Activated CD4-positive, alpha-beta T cell treated with anti-CD3 and anti-CD28 coated beads for 36 hours (primary cell): ENCODE measurements at regions of chr20 and their contacts with region 1.

Region 1: GRCh38 chr20:23988561-23988960 is at the start of gene GGTLC1:
- DNase-seq: no peak
- ATAC-seq: no peak
- H3K4me3 Mint-ChIP-seq: no peak within 1 kb of the TSS
- H3K27ac Mint-ChIP-seq: no peak within 1 kb of the TSS
- H3K4me1 Mint-ChIP-seq: no peaks in the 10 kb centered on the region
- H3K27me3 Mint-ChIP-seq: no peaks in the 10 kb centered on the region
- total RNA-seq, gene GGTLC1: not detected

Region 2: DNA sequence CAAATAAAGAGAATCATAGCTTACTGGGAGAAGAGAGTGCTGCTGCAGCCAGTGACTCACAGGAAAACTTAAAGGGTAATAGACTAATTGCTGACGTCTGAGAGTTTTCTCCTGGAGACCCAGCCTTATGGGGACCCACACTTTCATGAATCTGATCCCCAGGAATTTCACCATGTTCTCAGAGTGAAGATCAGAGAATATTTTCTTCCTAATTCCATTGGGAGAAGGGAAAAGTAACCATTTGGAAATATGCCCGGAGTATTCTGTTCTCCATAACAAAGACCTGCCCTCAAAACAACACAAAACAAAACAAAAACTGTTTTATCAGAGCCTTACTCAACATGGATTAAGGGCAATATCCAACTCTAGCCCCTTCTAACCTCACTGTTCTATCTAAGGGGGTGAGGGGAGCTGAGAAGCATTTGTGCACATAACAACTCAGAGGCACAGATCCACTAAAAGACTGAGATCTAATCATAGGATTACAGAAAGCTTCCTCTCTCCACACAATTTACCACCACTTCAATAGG is 1121.7 kb before region 1 on chr20:
- CTCF ChIA-PET with region 1: no interaction called
- POLR2A ChIA-PET with region 1: no interaction called
- intact Hi-C with region 1: no loop called
- DNase-seq: no peak
- ATAC-seq: no peak
- H3K4me3 Mint-ChIP-seq: no peak overlapping the region
- H3K27ac Mint-ChIP-seq: no peak overlapping the region
- H3K4me1 Mint-ChIP-seq: no peaks in the 10 kb centered on the region
- H3K27me3 Mint-ChIP-seq: peaks cover 2% of the 10 kb centered on the region

Region 3: GRCh38 chr20:23937303-23938117 is 51.1 kb before region 1 on chr20:
- CTCF ChIA-PET with region 1: no interaction called
- POLR2A ChIA-PET with region 1: no interaction called
- intact Hi-C with region 1: loop called in 1 of 2 experiments (anchors 1 kb)
- DNase-seq: peak; percentile 74
- ATAC-seq: peak; percentile 90
- H3K4me3 Mint-ChIP-seq: no peak overlapping the region
- H3K27ac Mint-ChIP-seq: no peak overlapping the region
- H3K4me1 Mint-ChIP-seq: no peaks in the 10 kb centered on the region
- H3K27me3 Mint-ChIP-seq: no peaks in the 10 kb centered on the region

Region 4: DNA sequence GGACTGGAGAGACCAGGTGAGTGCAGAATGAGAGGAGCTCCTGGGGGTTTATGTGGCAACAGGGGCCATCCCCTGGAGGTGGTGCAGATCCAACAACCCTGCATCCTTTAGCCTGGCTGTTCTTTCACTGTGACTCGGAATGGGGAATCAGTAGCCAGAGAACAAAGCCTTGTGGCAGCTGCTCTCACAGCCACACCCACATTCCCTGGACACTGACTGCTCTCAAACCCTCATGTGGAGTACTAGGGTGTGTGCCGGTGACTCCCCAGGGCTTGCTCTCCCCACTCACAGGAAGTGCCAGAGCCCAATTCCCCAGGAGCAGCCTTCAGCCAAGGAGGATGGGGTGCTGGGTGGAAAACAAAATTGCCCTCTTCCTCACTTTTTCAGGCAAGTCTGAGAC is 30.2 kb after region 1 on chr20:
- CTCF ChIA-PET with region 1: no interaction called
- POLR2A ChIA-PET with region 1: no interaction called
- intact Hi-C with region 1: no loop called
- DNase-seq: no peak
- ATAC-seq: no peak
- H3K4me3 Mint-ChIP-seq: no peak overlapping the region
- H3K27ac Mint-ChIP-seq: no peak overlapping the region
- H3K4me1 Mint-ChIP-seq: peaks cover 12% of the 10 kb centered on the region
- H3K27me3 Mint-ChIP-seq: peaks cover 4% of the 10 kb centered on the region